Breast epithelium (tissue), 4 donors: ENCODE measurements at regions of chr10 and their contacts with region 1.

Region 1: GRCh38 chr10:60374836-60375235 is 14.8 kb downstream of the ANK3 start:
- DNase-seq: no peak
- H3K4me3 ChIP-seq: no peak overlapping the region
- H3K27ac ChIP-seq: no peak overlapping the region
- H3K4me1 ChIP-seq: no peaks in the 10 kb centered on the region
- H3K27me3 ChIP-seq: no peaks in the 10 kb centered on the region
- CTCF ChIP-seq: no peak
- POLR2A ChIP-seq: no peak

Region 2: GRCh38 chr10:60358282-60358681 is 16.6 kb before region 1 on chr10:
- intact Hi-C with region 1: loop called (anchors 1 kb)
- DNase-seq: no peak
- H3K4me3 ChIP-seq: no peak overlapping the region
- H3K27ac ChIP-seq: no peak overlapping the region
- H3K4me1 ChIP-seq: no peaks in the 10 kb centered on the region
- H3K27me3 ChIP-seq: no peaks in the 10 kb centered on the region
- CTCF ChIP-seq: no peak
- POLR2A ChIP-seq: no peak